ENCODE measurements at regions of chr16 and their contacts with region 1.

Region 1: DNA sequence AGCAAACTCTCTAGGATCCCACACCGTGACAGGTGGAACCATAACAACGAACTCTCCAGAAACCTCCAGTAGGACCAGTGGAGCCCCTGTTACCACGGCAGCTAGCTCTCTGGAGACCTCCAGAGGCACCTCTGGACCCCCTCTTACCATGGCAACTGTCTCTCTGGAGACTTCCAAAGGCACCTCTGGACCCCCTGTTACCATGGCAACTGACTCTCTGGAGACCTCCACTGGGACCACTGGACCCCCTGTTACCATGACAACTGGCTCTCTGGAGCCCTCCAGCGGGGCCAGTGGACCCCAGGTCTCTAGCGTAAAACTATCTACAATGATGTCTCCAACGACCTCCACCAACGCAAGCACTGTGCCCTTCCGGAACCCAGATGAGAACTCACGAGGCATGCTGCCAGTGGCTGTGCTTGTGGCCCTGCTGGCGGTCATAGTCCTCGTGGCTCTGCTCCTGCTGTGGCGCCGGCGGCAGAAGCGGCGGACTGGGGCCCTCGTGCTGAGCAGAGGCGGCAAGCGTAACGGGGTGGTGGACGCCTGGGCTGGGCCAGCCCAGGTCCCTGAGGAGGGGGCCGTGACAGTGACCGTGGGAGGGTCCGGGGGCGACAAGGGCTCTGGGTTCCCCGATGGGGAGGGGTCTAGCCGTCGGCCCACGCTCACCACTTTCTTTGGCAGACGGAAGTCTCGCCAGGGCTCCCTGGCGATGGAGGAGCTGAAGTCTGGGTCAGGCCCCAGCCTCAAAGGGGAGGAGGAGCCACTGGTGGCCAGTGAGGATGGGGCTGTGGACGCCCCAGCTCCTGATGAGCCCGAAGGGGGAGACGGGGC is 1.3 kb downstream of the SPN start:
- DNase-seq: peak in 10 of 14 experiments; percentile 26 to 75 (median 46)
- ATAC-seq: peak; percentile 33
- H3K4me3 ChIP-seq: peak overlapping the region; percentile 98
- H3K4me3 Mint-ChIP-seq: peak overlapping the region; percentile 98
- H3K27ac ChIP-seq: peak overlapping the region; percentile 64 to 88
- H3K27ac Mint-ChIP-seq: peak overlapping the region; percentile 95
- H3K4me1 ChIP-seq: peaks cover 86% of the 10 kb centered on the region
- H3K4me1 Mint-ChIP-seq: peaks cover 66% of the 10 kb centered on the region
- H3K27me3 ChIP-seq: no peaks in the 10 kb centered on the region
- H3K27me3 Mint-ChIP-seq: no peaks in the 10 kb centered on the region
- CTCF ChIP-seq: no peak

Region 2: GRCh38 chr16:29678691-29679267 is 14.5 kb after region 1 on chr16 and contains the start of gene QPRT:
- CTCF ChIA-PET with region 1: no interaction called
- POLR2A ChIA-PET with region 1: interaction called, 10 read pairs
- intact Hi-C with region 1: loop called (anchors 2 kb)
- DNase-seq: no peak
- ATAC-seq: no peak
- H3K4me3 ChIP-seq: peak within 1 kb of the TSS; percentile 22
- H3K4me3 Mint-ChIP-seq: peak within 1 kb of the TSS; percentile 43
- H3K27ac ChIP-seq: peak within 1 kb of the TSS in 1 of 2 donors; percentile 21
- H3K27ac Mint-ChIP-seq: peak within 1 kb of the TSS; percentile 73
- H3K4me1 ChIP-seq: peaks cover 19% of the 10 kb centered on the region
- H3K4me1 Mint-ChIP-seq: peaks cover 17% of the 10 kb centered on the region
- H3K27me3 ChIP-seq: no peaks in the 10 kb centered on the region
- H3K27me3 Mint-ChIP-seq: no peaks in the 10 kb centered on the region
- CTCF ChIP-seq: no peak
- total RNA-seq, gene QPRT: 0.19 to 0.45 TPM

Region 3: DNA sequence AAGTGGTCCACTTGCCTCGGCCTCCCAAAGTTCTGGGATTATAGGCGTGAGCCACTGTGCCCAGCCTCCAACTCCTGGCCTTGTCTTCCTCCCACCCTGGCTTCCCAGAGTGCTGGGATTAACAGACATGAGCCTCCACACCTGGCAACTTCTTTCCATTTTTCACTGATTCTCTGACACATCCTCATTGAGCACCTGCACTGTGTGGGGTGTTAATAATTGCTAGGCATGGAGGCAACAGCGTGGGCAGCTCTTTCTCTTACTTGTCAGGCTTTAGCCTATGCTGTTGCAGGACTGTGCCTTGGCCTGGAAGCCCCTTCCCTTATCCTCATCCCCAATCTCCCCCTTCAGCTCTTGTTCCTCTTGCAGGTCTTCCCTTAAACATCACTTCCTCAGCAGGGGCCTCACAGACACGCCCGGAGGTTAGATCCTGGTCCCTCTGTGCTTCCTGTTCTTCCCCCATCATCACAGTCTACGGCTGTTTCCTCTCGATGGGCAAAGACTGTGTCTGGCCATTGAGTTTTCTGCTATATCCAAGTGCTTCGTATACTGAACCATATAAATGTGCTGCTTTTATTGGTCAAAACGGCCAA is 22.5 kb after region 1 on chr16:
- CTCF ChIA-PET with region 1: no interaction called
- POLR2A ChIA-PET with region 1: no interaction called
- intact Hi-C with region 1: loop called in 1 of 2 experiments (anchors 2 kb)
- DNase-seq: no peak
- ATAC-seq: no peak
- H3K4me3 ChIP-seq: no peak overlapping the region
- H3K4me3 Mint-ChIP-seq: no peak overlapping the region
- H3K27ac ChIP-seq: no peak overlapping the region
- H3K27ac Mint-ChIP-seq: no peak overlapping the region
- H3K4me1 ChIP-seq: peaks cover 12% of the 10 kb centered on the region
- H3K4me1 Mint-ChIP-seq: peaks cover 11% of the 10 kb centered on the region
- H3K27me3 ChIP-seq: no peaks in the 10 kb centered on the region
- H3K27me3 Mint-ChIP-seq: no peaks in the 10 kb centered on the region
- CTCF ChIP-seq: no peak

Region 4: GRCh38 chr16:29710227-29711219 is 46.2 kb after region 1 on chr16:
- CTCF ChIA-PET with region 1: no interaction called
- POLR2A ChIA-PET with region 1: no interaction called
- intact Hi-C with region 1: no loop called
- DNase-seq: peak in 7 of 14 experiments; percentile 11 to 84 (median 63)
- ATAC-seq: peak; percentile 100
- H3K4me3 ChIP-seq: no peak overlapping the region
- H3K4me3 Mint-ChIP-seq: no peak overlapping the region
- H3K27ac ChIP-seq: no peak overlapping the region
- H3K27ac Mint-ChIP-seq: peak overlapping the region; percentile 35
- H3K4me1 ChIP-seq: peaks cover 9% of the 10 kb centered on the region
- H3K4me1 Mint-ChIP-seq: peaks cover 11% of the 10 kb centered on the region
- H3K27me3 ChIP-seq: no peaks in the 10 kb centered on the region
- H3K27me3 Mint-ChIP-seq: no peaks in the 10 kb centered on the region
- CTCF ChIP-seq: peak; percentile 74

Measured in CD4-positive, alpha-beta T cell (primary cell).